ENCODE measurements at regions of chr20 and their contacts with region 1.

Region 1: GRCh38 chr20:59688999-59689398 is 84.7 kb downstream of the PHACTR3 start:
- DNase-seq: no peak
- ATAC-seq: no peak
- H3K4me3 ChIP-seq: no peak overlapping the region
- H3K27ac ChIP-seq: no peak overlapping the region
- H3K4me1 ChIP-seq: no peaks in the 10 kb centered on the region
- H3K27me3 ChIP-seq: peaks cover 0 to 5% of the 10 kb centered on the region in 2 experiments; a peak in 1 of 5 replicates
- CTCF ChIP-seq: no peak
- EP300 ChIP-seq: no peak
- POLR2A ChIP-seq: no peak
- RAD21 ChIP-seq: no peak

Region 2: GRCh38 chr20:59628171-59628570 is 60.8 kb before region 1 on chr20:
- CTCF ChIA-PET with region 1: no interaction called
- POLR2A ChIA-PET with region 1: no interaction called
- in situ Hi-C with region 1: loop called (anchors 10 kb)
- intact Hi-C with region 1: no loop called
- DNase-seq: no peak
- ATAC-seq: no peak
- H3K4me3 ChIP-seq: no peak overlapping the region
- H3K27ac ChIP-seq: no peak overlapping the region
- H3K4me1 ChIP-seq: no peaks in the 10 kb centered on the region
- H3K27me3 ChIP-seq: peaks cover 10 to 57% of the 10 kb centered on the region in 2 experiments; a peak in 3 of 5 replicates
- CTCF ChIP-seq: no peak
- EP300 ChIP-seq: no peak
- POLR2A ChIP-seq: no peak
- RAD21 ChIP-seq: no peak

Region 3: GRCh38 chr20:59735917-59736316 is 46.9 kb after region 1 on chr20:
- CTCF ChIA-PET with region 1: no interaction called
- POLR2A ChIA-PET with region 1: no interaction called
- in situ Hi-C with region 1: no loop called
- intact Hi-C with region 1: no loop called
- DNase-seq: no peak
- ATAC-seq: no peak
- H3K4me3 ChIP-seq: no peak overlapping the region
- H3K27ac ChIP-seq: no peak overlapping the region
- H3K4me1 ChIP-seq: no peaks in the 10 kb centered on the region
- H3K27me3 ChIP-seq: peaks cover 2 to 13% of the 10 kb centered on the region in 2 experiments; a peak in 4 of 5 replicates
- CTCF ChIP-seq: no peak
- EP300 ChIP-seq: no peak
- POLR2A ChIP-seq: no peak
- RAD21 ChIP-seq: no peak